IMR-90 (cell line): ENCODE measurements at regions of chr2 and their contacts with region 1.

Region 1: DNA sequence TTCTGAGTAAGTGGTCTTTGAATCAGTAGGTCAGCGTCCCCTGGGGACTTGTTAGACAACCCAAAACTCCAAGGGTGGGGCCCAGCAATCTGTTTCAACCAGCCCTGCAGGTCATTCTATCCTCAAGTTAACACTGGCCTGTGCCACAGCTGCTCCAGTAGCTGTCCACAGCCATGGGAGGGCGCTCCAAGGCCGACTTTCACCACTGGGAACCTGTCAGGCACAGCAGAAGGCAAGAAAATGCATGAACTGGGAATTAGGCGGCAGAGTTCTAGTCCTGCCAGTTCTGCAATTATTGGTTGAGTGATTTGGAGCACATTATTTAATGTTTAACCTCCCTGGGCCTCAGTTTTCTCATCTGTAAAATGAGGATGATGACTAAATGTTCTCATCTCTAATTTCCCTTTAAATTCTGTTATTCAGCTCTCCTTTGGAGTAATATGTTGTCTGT is 17.4 kb upstream of the MRPL33 start:
- DNase-seq: peak; percentile 80
- ATAC-seq: peak; percentile 99
- H3K4me3 ChIP-seq: no peak overlapping the region
- H3K27ac ChIP-seq: no peak overlapping the region
- H3K4me1 ChIP-seq: peaks cover 5% of the 10 kb centered on the region
- H3K27me3 ChIP-seq: no peaks in the 10 kb centered on the region
- CTCF ChIP-seq: peak; percentile 96
- POLR2A ChIP-seq: peak; percentile 61
- RAD21 ChIP-seq: peak; percentile 99

Region 2: DNA sequence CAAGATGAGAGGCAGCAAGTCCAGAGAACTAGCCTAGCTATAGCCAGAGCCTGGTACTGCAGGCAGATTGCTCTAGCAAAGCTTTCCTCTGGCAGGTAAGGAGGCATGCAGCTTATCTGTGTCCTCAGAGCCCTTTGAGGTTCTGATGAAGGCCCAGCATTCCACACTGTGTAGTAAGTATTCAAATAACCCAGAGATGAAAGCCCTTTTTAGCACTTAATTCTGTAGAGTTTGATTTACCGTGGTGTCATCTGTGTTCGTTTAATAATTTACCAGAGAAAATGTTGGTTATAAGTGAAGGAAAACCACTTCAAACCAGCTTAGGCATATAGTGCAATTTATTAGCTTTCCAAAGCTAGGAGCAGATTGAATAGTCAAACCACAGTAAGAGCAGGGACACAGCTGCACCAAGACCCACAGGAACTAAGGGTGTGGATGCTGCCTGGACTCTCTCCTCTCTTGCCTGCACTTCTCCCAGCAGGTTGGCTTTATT is 363.0 kb after region 1 on chr2:
- CTCF ChIA-PET with region 1: no interaction called
- POLR2A ChIA-PET with region 1: no interaction called
- dilution Hi-C with region 1: no loop called
- in situ Hi-C with region 1: no loop called
- intact Hi-C with region 1: no loop called
- DNase-seq: no peak
- ATAC-seq: no peak
- H3K4me3 ChIP-seq: no peak overlapping the region
- H3K27ac ChIP-seq: no peak overlapping the region
- H3K4me1 ChIP-seq: no peaks in the 10 kb centered on the region
- H3K27me3 ChIP-seq: no peaks in the 10 kb centered on the region
- CTCF ChIP-seq: no peak
- POLR2A ChIP-seq: no peak
- RAD21 ChIP-seq: no peak

Region 3: DNA sequence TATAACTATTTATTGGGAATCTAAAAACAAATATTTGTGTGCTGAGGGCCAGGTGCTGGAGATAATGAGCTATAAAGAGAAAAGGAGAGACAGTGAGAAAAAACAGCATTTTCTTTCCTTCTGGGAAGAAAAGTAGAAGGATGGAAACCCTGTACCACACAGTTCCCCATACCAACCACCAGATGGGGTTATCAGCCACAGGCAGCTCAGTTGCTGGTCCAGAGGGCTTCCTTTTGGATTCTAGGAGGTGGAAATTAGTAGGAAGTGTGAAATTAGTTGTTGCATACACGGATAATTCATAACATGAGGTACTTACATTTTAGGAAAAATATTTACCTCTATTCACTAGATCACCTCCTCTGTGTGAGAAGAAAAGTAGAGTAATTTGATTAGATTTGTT is 401.5 kb after region 1 on chr2:
- CTCF ChIA-PET with region 1: interaction called, 10 read pairs
- POLR2A ChIA-PET with region 1: no interaction called
- dilution Hi-C with region 1: no loop called
- in situ Hi-C with region 1: no loop called
- intact Hi-C with region 1: no loop called
- DNase-seq: no peak
- ATAC-seq: no peak
- H3K4me3 ChIP-seq: no peak overlapping the region
- H3K27ac ChIP-seq: no peak overlapping the region
- H3K4me1 ChIP-seq: peaks cover 3% of the 10 kb centered on the region; the same call in 1 of the 2 replicates
- H3K27me3 ChIP-seq: no peaks in the 10 kb centered on the region
- CTCF ChIP-seq: 0 out of 2 replicates have a peak, but pooled peaks have one; percentile 30
- POLR2A ChIP-seq: no peak
- RAD21 ChIP-seq: peak; percentile 36; the same call in 1 of the 2 replicates

Region 4: GRCh38 chr2:28224648-28225472 is 470.7 kb after region 1 on chr2:
- CTCF ChIA-PET with region 1: no interaction called
- POLR2A ChIA-PET with region 1: no interaction called
- dilution Hi-C with region 1: no loop called
- in situ Hi-C with region 1: no loop called
- intact Hi-C with region 1: loop called (anchors 10 kb)
- DNase-seq: peak; percentile 93
- ATAC-seq: peak; percentile 86
- H3K4me3 ChIP-seq: no peak overlapping the region
- H3K27ac ChIP-seq: peak overlapping the region; percentile 94
- H3K4me1 ChIP-seq: peaks cover 12% of the 10 kb centered on the region
- H3K27me3 ChIP-seq: no peaks in the 10 kb centered on the region
- CTCF ChIP-seq: no peak
- POLR2A ChIP-seq: no peak
- RAD21 ChIP-seq: no peak

Region 5: GRCh38 chr2:28338046-28338817 is 584.1 kb after region 1 on chr2:
- CTCF ChIA-PET with region 1: no interaction called
- POLR2A ChIA-PET with region 1: no interaction called
- dilution Hi-C with region 1: no loop called
- in situ Hi-C with region 1: no loop called
- intact Hi-C with region 1: loop called (anchors 1 kb)
- DNase-seq: peak; percentile 85
- ATAC-seq: peak; percentile 79
- H3K4me3 ChIP-seq: no peak overlapping the region
- H3K27ac ChIP-seq: peak overlapping the region; percentile 70; the same call in 1 of the 2 replicates
- H3K4me1 ChIP-seq: peaks cover 24% of the 10 kb centered on the region
- H3K27me3 ChIP-seq: no peaks in the 10 kb centered on the region
- CTCF ChIP-seq: no peak
- POLR2A ChIP-seq: no peak
- RAD21 ChIP-seq: peak; percentile 14; the same call in 1 of the 2 replicates

Region 6: DNA sequence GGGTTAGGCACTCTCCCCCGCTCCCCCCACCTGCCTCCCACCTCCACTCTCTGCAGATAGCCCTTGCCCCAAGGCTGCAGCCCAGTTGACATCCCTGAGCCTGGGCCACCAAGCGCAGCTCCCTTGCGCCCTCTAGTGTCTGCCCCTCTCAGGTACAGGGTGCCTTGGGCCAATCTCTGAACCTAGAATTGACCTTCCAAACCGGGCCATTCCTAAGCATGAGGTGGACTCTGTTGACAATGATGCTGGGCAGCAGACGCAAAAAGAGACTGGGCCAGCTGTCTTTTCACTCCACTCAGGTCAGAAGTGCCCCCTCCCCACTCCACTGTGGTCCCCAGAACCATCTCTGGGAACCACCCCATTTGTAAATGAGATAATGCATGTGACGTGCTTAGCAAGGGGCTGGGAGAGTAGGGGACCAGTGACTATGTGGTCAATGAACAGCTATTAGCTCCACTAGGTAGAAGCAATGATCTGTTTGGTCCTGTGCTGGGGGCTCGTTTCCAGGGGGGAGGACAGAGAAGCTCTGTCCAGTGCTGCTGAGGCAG is 698.4 kb after region 1 on chr2:
- CTCF ChIA-PET with region 1: no interaction called
- POLR2A ChIA-PET with region 1: no interaction called
- dilution Hi-C with region 1: no loop called
- in situ Hi-C with region 1: no loop called
- intact Hi-C with region 1: loop called (anchors 1 kb)
- DNase-seq: peak; percentile 27
- ATAC-seq: peak; percentile 84
- H3K4me3 ChIP-seq: no peak overlapping the region
- H3K27ac ChIP-seq: no peak overlapping the region
- H3K4me1 ChIP-seq: peaks cover 19% of the 10 kb centered on the region
- H3K27me3 ChIP-seq: no peaks in the 10 kb centered on the region
- CTCF ChIP-seq: peak; percentile 90
- POLR2A ChIP-seq: no peak
- RAD21 ChIP-seq: peak; percentile 92

Region 7: GRCh38 chr2:28828382-28828781 is 1074.2 kb after region 1 on chr2:
- CTCF ChIA-PET with region 1: no interaction called
- POLR2A ChIA-PET with region 1: no interaction called
- dilution Hi-C with region 1: no loop called
- in situ Hi-C with region 1: no loop called
- intact Hi-C with region 1: no loop called
- DNase-seq: peak; percentile 49
- ATAC-seq: peak; percentile 21
- H3K4me3 ChIP-seq: no peak overlapping the region
- H3K27ac ChIP-seq: no peak overlapping the region
- H3K4me1 ChIP-seq: no peaks in the 10 kb centered on the region
- H3K27me3 ChIP-seq: no peaks in the 10 kb centered on the region
- CTCF ChIP-seq: no peak
- POLR2A ChIP-seq: no peak
- RAD21 ChIP-seq: no peak